PC-3 (cell line): ENCODE measurements at regions of chr2 and their contacts with region 1.

Region 1: DNA sequence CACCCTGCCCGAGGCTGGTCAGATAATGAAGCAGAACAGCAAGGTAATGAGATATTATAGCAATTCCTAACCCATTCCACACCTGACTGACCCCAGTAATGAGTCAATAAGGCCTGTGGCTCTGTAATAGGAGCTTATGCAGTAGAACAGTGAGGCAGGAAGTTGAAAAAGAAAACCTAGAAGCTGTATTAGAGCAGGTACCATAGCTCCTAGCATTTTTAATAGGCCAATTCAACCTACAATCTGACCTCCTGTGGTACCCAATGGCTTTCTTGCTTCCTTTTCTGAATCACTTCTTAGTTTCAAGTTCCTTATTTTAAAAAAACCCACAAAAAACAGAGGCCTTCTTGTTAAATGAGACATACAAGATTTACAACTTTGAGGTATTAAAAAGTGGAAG is 43.6 kb upstream of the MAP2 start:
- DNase-seq: peak; percentile 46
- ATAC-seq: peak; percentile 60
- H3K4me3 ChIP-seq: no peak overlapping the region
- H3K27ac ChIP-seq: no peak overlapping the region
- H3K4me1 ChIP-seq: peaks cover 31% of the 10 kb centered on the region
- H3K27me3 ChIP-seq: no peaks in the 10 kb centered on the region
- CTCF ChIP-seq: no peak

Region 2: DNA sequence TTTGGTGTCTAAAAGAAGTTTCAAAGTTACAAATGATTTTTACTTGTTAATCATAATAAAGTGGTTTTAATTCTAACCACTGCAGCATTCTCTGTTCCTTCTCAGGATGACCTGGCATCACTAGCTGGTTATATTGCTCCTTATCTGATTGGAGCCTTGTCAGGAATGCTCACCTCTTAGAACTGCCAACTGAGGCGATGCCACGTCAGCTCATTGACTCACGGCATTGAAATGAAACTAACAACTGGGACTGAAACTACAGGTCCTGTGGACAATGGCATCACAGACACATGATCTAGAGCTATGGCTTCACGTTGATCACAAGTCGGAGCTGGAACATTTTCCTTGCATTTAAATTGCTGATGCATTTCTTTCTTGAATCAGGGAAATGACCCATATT is 11.4 kb before region 1 on chr2:
- CTCF ChIA-PET with region 1: interaction called, 3 read pairs
- POLR2A ChIA-PET with region 1: no interaction called
- intact Hi-C with region 1: loop called (anchors 1 kb)
- DNase-seq: peak; percentile 99
- ATAC-seq: peak; percentile 94
- H3K4me3 ChIP-seq: peak overlapping the region; percentile 38
- H3K27ac ChIP-seq: peak overlapping the region; percentile 91
- H3K4me1 ChIP-seq: peaks cover 33% of the 10 kb centered on the region
- H3K27me3 ChIP-seq: no peaks in the 10 kb centered on the region
- CTCF ChIP-seq: no peak

Region 3: GRCh38 chr2:210428415-210429179 is 1048.3 kb after region 1 on chr2:
- CTCF ChIA-PET with region 1: no interaction called
- POLR2A ChIA-PET with region 1: no interaction called
- intact Hi-C with region 1: loop called (anchors 5 kb)
- DNase-seq: peak; percentile 16
- ATAC-seq: no peak; the same call in 1 of the 2 replicates
- H3K4me3 ChIP-seq: no peak overlapping the region
- H3K27ac ChIP-seq: no peak overlapping the region
- H3K4me1 ChIP-seq: no peaks in the 10 kb centered on the region
- H3K27me3 ChIP-seq: no peaks in the 10 kb centered on the region
- CTCF ChIP-seq: no peak